ENCODE measurements at regions of chr16 and their contacts with region 1.

Region 1: GRCh38 chr16:75764154-75764768 is 38.0 kb upstream of the CPHXL start:
- DNase-seq: peak; percentile 80
- ATAC-seq: peak; percentile 55
- H3K4me3 ChIP-seq: no peak overlapping the region
- H3K4me3 Mint-ChIP-seq: no peak overlapping the region
- H3K27ac ChIP-seq: no peak overlapping the region
- H3K27ac Mint-ChIP-seq: peak overlapping the region; percentile 75
- H3K4me1 ChIP-seq: peaks cover 14 to 23% of the 10 kb centered on the region in 2 donors
- H3K4me1 Mint-ChIP-seq: peaks cover 23% of the 10 kb centered on the region
- H3K27me3 ChIP-seq: no peaks in the 10 kb centered on the region
- H3K27me3 Mint-ChIP-seq: peaks cover 6% of the 10 kb centered on the region
- CTCF ChIP-seq: peak; percentile 86

Region 2: GRCh38 chr16:74577882-74578366 is 1186.3 kb before region 1 on chr16:
- CTCF ChIA-PET with region 1: no interaction called
- POLR2A ChIA-PET with region 1: no interaction called
- intact Hi-C with region 1: no loop called
- DNase-seq: no peak
- ATAC-seq: no peak
- H3K4me3 ChIP-seq: no peak overlapping the region
- H3K4me3 Mint-ChIP-seq: peak overlapping the region; percentile 15
- H3K27ac ChIP-seq: no peak overlapping the region
- H3K27ac Mint-ChIP-seq: peak overlapping the region; percentile 34
- H3K4me1 ChIP-seq: peaks cover 12 to 14% of the 10 kb centered on the region in 2 donors
- H3K4me1 Mint-ChIP-seq: peaks cover 50% of the 10 kb centered on the region
- H3K27me3 ChIP-seq: no peaks in the 10 kb centered on the region
- H3K27me3 Mint-ChIP-seq: no peaks in the 10 kb centered on the region
- CTCF ChIP-seq: no peak

Region 3: DNA sequence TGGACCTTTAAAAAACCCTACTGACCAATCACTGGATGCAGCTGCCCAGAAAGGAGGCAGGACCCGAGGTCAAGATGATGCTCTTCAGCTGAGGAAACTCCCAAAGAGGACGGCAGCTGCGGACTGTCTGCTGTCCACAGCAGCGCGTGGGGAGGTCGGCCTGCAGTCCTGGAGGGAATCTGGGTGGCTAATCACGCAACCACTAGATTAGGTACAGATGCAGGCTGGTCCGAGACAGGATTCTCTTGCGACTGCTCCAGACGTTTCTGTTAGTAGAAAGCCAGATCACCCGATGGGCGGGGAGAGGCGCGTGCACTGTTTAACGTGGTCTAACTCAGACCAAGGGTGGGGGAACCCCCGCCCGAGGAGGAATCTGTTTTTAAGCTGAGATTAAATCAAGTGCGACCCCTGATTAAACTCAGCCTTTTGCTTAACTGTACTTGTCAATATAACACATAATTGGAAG is 566.1 kb before region 1 on chr16:
- CTCF ChIA-PET with region 1: interaction called, 60 read pairs
- POLR2A ChIA-PET with region 1: no interaction called
- intact Hi-C with region 1: no loop called
- DNase-seq: no peak
- ATAC-seq: no peak
- H3K4me3 ChIP-seq: no peak overlapping the region
- H3K4me3 Mint-ChIP-seq: no peak overlapping the region
- H3K27ac ChIP-seq: no peak overlapping the region
- H3K27ac Mint-ChIP-seq: no peak overlapping the region
- H3K4me1 ChIP-seq: peaks cover 11 to 12% of the 10 kb centered on the region in 2 donors
- H3K4me1 Mint-ChIP-seq: peaks cover 10% of the 10 kb centered on the region
- H3K27me3 ChIP-seq: peaks cover 0 to 54% (median 12%) of the 10 kb centered on the region in 4 experiments
- H3K27me3 Mint-ChIP-seq: peaks cover 37% of the 10 kb centered on the region
- CTCF ChIP-seq: no peak

Region 4: DNA sequence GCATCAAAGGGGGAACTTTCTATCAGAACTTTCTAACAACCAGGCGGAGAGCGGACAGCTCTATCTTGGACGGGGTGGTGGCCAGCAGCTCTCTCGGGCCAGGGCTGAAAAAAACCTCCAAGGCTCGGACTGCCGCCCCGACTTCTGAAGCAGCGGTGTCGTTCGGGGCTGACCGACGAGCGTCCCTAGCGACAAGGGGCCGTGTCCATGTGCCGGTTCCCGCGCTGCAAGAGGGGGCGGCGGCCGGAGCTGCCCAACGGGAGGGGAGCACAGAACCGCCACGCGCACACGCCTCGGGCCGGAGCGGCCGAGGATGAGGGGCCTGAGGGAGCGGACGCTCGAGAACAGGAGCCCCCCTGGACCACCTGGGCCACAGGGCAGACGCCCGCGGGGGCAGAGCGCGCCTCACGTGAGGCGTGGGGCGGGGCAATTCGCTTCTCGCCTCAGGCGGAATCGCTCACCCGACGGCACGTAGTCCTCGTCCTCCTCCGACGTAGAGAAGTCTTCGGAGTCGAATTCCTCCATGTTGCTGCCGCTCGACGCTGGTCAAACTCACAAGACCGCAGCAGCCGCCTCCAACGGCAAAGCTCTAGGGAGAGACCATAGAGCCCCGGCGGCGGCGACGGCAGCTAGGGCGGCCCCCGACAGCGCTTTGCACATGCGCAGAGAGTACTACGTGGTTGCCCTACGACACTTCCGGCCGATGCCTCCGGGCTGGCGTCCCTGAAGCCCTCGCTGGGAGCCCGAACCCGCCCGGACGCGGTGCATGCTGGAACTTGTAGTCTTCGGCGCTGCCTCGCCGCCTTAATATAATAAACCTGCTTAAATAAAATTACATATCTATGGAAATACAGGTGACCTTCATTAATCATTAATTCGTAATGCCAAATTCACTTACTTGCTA is 331.2 kb before region 1 on chr16 and contains the start of gene CFDP1:
- CTCF ChIA-PET with region 1: interaction called, 4 read pairs
- POLR2A ChIA-PET with region 1: no interaction called
- intact Hi-C with region 1: loop called (anchors 1 kb)
- DNase-seq: peak; percentile 98
- ATAC-seq: peak; percentile 86
- H3K4me3 ChIP-seq: peak within 1 kb of the TSS; percentile 94 to 100 (median 95)
- H3K4me3 Mint-ChIP-seq: peak within 1 kb of the TSS; percentile 88
- H3K27ac ChIP-seq: peak within 1 kb of the TSS; percentile 91 to 99
- H3K27ac Mint-ChIP-seq: peak within 1 kb of the TSS; percentile 95
- H3K4me1 ChIP-seq: peaks cover 7 to 15% of the 10 kb centered on the region in 2 donors
- H3K4me1 Mint-ChIP-seq: peaks cover 20% of the 10 kb centered on the region
- H3K27me3 ChIP-seq: no peaks in the 10 kb centered on the region
- H3K27me3 Mint-ChIP-seq: no peaks in the 10 kb centered on the region
- CTCF ChIP-seq: no peak
- total RNA-seq, gene CFDP1: 39.5 and 42.8 TPM in 2 replicates

Region 5: GRCh38 chr16:75519881-75520280 is 244.4 kb before region 1 on chr16:
- CTCF ChIA-PET with region 1: interaction called, 17 read pairs
- POLR2A ChIA-PET with region 1: interaction called, 5 read pairs
- intact Hi-C with region 1: loop called (anchors 1 kb)
- DNase-seq: no peak
- ATAC-seq: no peak
- H3K4me3 ChIP-seq: no peak overlapping the region
- H3K4me3 Mint-ChIP-seq: no peak overlapping the region
- H3K27ac ChIP-seq: no peak overlapping the region
- H3K27ac Mint-ChIP-seq: no peak overlapping the region
- H3K4me1 ChIP-seq: peaks cover 0 to 13% of the 10 kb centered on the region in 2 donors
- H3K4me1 Mint-ChIP-seq: peaks cover 12% of the 10 kb centered on the region
- H3K27me3 ChIP-seq: no peaks in the 10 kb centered on the region
- H3K27me3 Mint-ChIP-seq: no peaks in the 10 kb centered on the region
- CTCF ChIP-seq: no peak

Region 6: GRCh38 chr16:75593825-75594820 is 170.1 kb before region 1 on chr16:
- CTCF ChIA-PET with region 1: no interaction called
- POLR2A ChIA-PET with region 1: interaction called, 10 read pairs
- intact Hi-C with region 1: no loop called
- DNase-seq: no peak
- ATAC-seq: no peak
- H3K4me3 ChIP-seq: no peak overlapping the region
- H3K4me3 Mint-ChIP-seq: no peak overlapping the region
- H3K27ac ChIP-seq: no peak overlapping the region
- H3K27ac Mint-ChIP-seq: no peak overlapping the region
- H3K4me1 ChIP-seq: no peaks in the 10 kb centered on the region
- H3K4me1 Mint-ChIP-seq: no peaks in the 10 kb centered on the region
- H3K27me3 ChIP-seq: no peaks in the 10 kb centered on the region
- H3K27me3 Mint-ChIP-seq: no peaks in the 10 kb centered on the region
- CTCF ChIP-seq: no peak

Region 7: DNA sequence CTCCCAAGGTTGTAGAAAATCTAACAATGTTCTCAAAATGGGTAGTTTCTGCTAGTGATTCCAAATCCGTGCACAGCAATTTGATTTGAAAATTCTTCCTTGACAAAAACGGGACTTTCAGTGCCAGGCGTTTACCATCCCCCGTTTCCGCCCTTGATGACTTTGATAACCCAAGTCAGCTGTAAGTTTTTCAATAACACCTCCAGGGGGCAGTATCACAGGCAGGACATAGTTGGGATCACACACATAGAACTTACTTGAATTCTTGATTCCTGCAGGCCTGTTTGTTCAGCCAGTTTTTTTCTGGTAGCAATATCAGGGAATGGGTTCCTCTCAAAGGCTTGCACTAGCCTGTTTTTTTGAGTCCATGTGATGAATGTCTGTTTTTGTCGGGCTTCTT is 68.6 kb before region 1 on chr16:
- CTCF ChIA-PET with region 1: interaction called, 3 read pairs
- POLR2A ChIA-PET with region 1: no interaction called
- intact Hi-C with region 1: loop called (anchors 2 kb)
- DNase-seq: no peak
- ATAC-seq: no peak
- H3K4me3 ChIP-seq: no peak overlapping the region
- H3K4me3 Mint-ChIP-seq: no peak overlapping the region
- H3K27ac ChIP-seq: no peak overlapping the region
- H3K27ac Mint-ChIP-seq: no peak overlapping the region
- H3K4me1 ChIP-seq: no peaks in the 10 kb centered on the region
- H3K4me1 Mint-ChIP-seq: no peaks in the 10 kb centered on the region
- H3K27me3 ChIP-seq: no peaks in the 10 kb centered on the region
- H3K27me3 Mint-ChIP-seq: no peaks in the 10 kb centered on the region
- CTCF ChIP-seq: no peak